ENCODE measurements at regions of chr17 and their contacts with region 1.

Region 1: GRCh38 chr17:67647482-67647881 is 70.3 kb upstream of the NOL11 start:
- DNase-seq: no peak
- ATAC-seq: no peak
- H3K4me3 ChIP-seq: no peak overlapping the region
- H3K27ac ChIP-seq: no peak overlapping the region
- H3K4me1 ChIP-seq: peaks cover 13% of the 10 kb centered on the region
- H3K27me3 ChIP-seq: no peaks in the 10 kb centered on the region
- CTCF ChIP-seq: no peak

Region 2: GRCh38 chr17:67689534-67690177 is 42.2 kb after region 1 on chr17:
- CTCF ChIA-PET with region 1: no interaction called
- POLR2A ChIA-PET with region 1: no interaction called
- intact Hi-C with region 1: loop called (anchors 5 kb)
- DNase-seq: peak; percentile 86
- ATAC-seq: peak; percentile 58
- H3K4me3 ChIP-seq: no peak overlapping the region
- H3K27ac ChIP-seq: no peak overlapping the region
- H3K4me1 ChIP-seq: no peaks in the 10 kb centered on the region
- H3K27me3 ChIP-seq: no peaks in the 10 kb centered on the region
- CTCF ChIP-seq: peak; percentile 96